Ascending aorta (tissue), 2 donors: ENCODE measurements at regions of chr1 and their contacts with region 1.

Region 1: DNA sequence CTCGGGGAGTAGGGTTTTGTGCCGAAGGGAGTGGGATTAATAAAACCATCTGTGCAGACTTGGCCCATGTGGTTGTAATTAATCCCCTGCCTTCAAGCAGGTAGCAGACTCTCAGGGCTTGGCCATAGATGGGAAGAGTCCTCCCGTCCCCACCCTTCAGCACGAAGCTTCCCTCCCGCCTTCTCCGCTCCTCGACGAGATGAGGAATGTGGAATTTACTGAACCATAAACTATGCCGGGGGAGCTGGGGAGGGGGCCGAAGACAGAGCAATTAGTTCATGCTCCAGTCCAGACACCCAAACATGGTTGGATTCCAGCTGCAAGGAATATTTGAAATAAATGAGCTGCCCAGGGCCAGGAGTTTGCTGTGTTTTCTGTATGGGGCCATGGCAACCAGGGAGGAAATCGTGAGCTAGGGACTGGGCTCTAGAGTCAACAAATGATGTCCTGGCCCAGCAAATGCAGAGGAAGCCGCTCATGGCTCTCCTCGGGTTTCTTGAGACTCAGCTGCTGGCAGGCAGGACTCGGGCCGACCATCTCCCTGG is 78.8 kb downstream of the SPSB1 start:
- DNase-seq: peak; percentile 45 to 95
- H3K4me3 ChIP-seq: no peak overlapping the region
- H3K27ac ChIP-seq: peak overlapping the region; percentile 89 to 96
- H3K4me1 ChIP-seq: peaks cover 41 to 67% of the 10 kb centered on the region in 2 donors
- H3K27me3 ChIP-seq: no peaks in the 10 kb centered on the region
- CTCF ChIP-seq: no peak

Region 2: GRCh38 chr1:9326596-9326995 is 44.9 kb before region 1 on chr1:
- intact Hi-C with region 1: loop called (anchors 2 kb)
- DNase-seq: peak in 1 of 2 donors; percentile 80
- H3K4me3 ChIP-seq: peak overlapping the region in 1 of 2 donors; percentile 28
- H3K27ac ChIP-seq: peak overlapping the region; percentile 82 to 95
- H3K4me1 ChIP-seq: peaks cover 30 to 58% of the 10 kb centered on the region in 2 donors
- H3K27me3 ChIP-seq: no peaks in the 10 kb centered on the region
- CTCF ChIP-seq: no peak